Endothelial cell of umbilical vein (primary cell): ENCODE measurements at regions of chr22 and their contacts with region 1.

Region 1: GRCh38 chr22:41873391-41873790 is 40.5 kb downstream of the SREBF2 start:
- DNase-seq: no peak
- H3K4me3 ChIP-seq: no peak overlapping the region
- H3K27ac ChIP-seq: no peak overlapping the region
- H3K4me1 ChIP-seq: no peaks in the 10 kb centered on the region
- H3K27me3 ChIP-seq: no peaks in the 10 kb centered on the region
- CTCF ChIP-seq: no peak
- POLR2A ChIP-seq: no peak

Region 2: DNA sequence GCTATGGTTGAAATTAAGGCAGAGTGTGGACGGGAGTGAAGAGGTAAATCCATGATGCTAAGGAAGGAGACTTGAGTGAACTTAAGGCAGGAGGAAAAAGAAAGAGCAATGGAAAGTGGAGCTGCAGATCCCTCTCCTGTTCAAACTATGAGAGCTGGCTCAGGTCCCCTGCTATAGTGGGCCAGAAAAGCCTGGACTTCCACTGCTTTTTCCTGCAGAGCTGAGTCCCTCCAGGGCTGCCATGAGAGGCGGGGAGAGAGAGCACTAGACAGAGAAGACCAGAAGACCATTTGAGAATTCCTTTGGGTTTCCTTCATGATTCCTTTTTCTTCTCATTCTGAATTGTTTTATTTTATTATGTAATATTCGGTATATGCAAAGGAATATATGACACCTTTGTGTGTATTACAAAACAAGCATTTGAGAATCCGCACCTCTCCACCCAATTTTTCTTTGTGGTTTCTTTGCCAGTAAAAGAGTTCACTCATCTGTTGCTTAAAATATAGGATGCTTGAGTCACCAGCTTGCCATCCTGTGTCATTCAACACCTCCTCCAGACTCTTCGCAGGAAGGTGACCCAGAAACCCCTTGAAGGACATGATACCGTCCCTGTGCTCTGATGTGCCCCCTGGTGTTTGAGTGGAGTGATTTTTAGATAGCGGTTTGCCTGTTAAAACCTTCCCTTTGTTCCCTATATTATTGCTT is 16.1 kb before region 1 on chr22:
- CTCF ChIA-PET with region 1: no interaction called
- POLR2A ChIA-PET with region 1: no interaction called
- dilution Hi-C with region 1: no loop called
- intact Hi-C with region 1: no loop called
- DNase-seq: peak; percentile 70
- H3K4me3 ChIP-seq: no peak overlapping the region
- H3K27ac ChIP-seq: no peak overlapping the region
- H3K4me1 ChIP-seq: peaks cover 10% of the 10 kb centered on the region
- H3K27me3 ChIP-seq: no peaks in the 10 kb centered on the region
- CTCF ChIP-seq: peak; percentile 60 to 65
- POLR2A ChIP-seq: no peak

Region 3: DNA sequence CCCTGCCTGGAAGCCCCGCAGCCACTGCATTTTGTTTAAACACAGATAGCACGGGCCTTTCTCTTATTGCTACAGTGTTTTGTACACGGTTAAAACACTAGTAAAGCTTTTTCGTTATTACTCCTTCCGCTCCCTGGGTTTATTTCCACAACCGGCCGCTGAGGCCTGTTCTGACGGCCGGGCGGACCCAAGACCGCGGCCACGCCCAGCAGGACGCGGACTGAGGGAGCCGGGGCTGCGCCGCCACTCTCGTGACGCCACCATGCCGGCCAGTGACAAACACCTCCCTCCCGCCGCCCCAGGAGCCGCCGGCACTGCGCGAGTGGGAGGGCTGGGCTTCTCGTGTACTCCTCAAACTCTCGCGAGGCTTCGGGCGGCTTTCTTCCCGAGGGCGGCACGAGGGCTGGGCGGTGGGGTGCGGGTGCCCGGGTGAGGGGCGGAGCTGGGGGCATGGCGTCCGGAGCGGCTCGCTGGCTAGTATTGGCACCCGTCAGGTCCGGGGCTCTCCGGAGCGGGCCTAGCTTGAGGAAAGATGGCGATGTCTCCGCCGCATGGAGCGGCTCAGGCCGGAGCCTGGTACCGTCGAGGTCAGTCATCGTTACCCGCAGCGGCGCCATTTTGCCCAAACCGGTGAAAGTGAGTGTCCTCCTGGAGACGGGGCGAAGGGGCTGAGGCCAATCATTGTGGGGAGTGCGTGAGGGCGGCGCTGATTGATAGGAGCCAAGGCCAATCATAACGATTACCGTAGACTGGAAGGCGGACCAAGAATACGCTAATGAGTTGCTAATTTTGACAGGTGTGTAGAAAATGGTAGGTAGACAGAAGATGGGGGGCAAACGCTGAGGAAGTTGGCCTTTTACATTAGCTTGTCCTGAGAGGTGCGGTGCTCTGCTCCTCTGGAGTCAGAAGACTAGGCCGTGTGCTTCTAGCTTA is 206.2 kb after region 1 on chr22 and contains the start of gene SMDT1:
- CTCF ChIA-PET with region 1: no interaction called
- POLR2A ChIA-PET with region 1: interaction called, 10 read pairs
- dilution Hi-C with region 1: no loop called
- intact Hi-C with region 1: no loop called
- DNase-seq: peak; percentile 98
- H3K4me3 ChIP-seq: peak within 1 kb of the TSS; percentile 59 to 96 (median 79)
- H3K27ac ChIP-seq: peak within 1 kb of the TSS; percentile 84
- H3K4me1 ChIP-seq: peaks cover 17% of the 10 kb centered on the region
- H3K27me3 ChIP-seq: no peaks in the 10 kb centered on the region
- CTCF ChIP-seq: no peak
- POLR2A ChIP-seq: peak; percentile 82
- total RNA-seq, gene SMDT1: 61.2 and 64.8 TPM in 2 replicates